Right cardiac atrium (tissue), 5 donors: ENCODE measurements at regions of chr3 and their contacts with region 1.

Region 1: GRCh38 chr3:189961525-189962161 is 159.1 kb downstream of the P3H2 start:
- DNase-seq: peak; percentile 65 to 83 (median 73)
- ATAC-seq: peak; percentile 64 to 83
- H3K4me3 ChIP-seq: no peak overlapping the region
- H3K27ac ChIP-seq: no peak overlapping the region
- H3K4me1 ChIP-seq: no peaks in the 10 kb centered on the region
- H3K27me3 ChIP-seq: peaks cover 3% of the 10 kb centered on the region

Region 2: GRCh38 chr3:190120269-190121060 is 158.8 kb after region 1 on chr3 and contains the start of gene P3H2:
- intact Hi-C with region 1: loop called in 1 of 4 experiments (anchors 10 kb)
- DNase-seq: peak; percentile 81 to 93 (median 93)
- ATAC-seq: peak; percentile 99
- H3K4me3 ChIP-seq: peak within 1 kb of the TSS; percentile 90
- H3K27ac ChIP-seq: peak within 1 kb of the TSS; percentile 65
- H3K4me1 ChIP-seq: no peaks in the 10 kb centered on the region
- H3K27me3 ChIP-seq: no peaks in the 10 kb centered on the region
- total RNA-seq, gene P3H2: 1.7 to 4.1 (median 3.0) TPM

Region 3: GRCh38 chr3:190204200-190204599 is 242.6 kb after region 1 on chr3:
- intact Hi-C with region 1: loop called (anchors 5 kb)
- DNase-seq: no peak
- ATAC-seq: no peak
- H3K4me3 ChIP-seq: no peak overlapping the region
- H3K27ac ChIP-seq: no peak overlapping the region
- H3K4me1 ChIP-seq: no peaks in the 10 kb centered on the region
- H3K27me3 ChIP-seq: no peaks in the 10 kb centered on the region

Region 4: DNA sequence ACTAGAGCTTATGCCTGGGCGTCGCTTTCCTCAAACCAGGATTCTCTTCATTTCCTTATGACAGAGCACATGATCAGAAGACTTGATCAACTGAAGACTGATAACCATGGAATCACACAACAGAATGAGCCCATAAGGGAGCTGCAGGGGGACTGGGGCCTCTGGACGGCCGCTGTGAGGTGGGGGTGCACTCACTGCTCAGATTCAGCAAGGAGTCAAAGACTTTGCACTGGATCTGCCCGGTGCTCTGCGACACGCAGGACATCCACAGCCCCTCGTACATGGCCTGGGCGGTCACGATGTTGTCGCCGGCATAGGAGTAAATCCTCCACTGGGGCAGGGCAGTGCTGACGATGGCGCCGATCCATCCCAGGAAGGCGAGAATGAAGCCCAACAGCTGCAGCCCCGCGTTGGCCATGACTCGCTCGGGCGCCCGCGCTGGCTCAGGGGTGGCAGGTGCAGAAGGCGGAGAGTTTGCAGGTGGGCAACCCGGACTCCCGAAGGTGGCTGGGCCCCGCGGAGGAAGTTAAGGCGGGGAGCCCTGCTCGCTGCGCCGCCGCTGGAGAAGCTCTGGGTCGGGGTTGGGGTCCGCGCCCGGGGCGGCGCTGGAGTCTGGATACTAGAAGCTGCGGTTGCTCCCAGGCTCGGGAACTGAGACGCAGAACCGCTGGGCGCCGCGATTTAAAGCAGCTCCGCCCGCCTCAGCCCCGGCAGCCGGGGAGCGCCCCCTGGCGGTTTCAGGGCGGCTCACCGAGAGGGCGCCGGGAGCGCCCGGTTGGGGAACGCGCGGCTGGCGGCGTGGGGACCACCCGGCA is 360.4 kb after region 1 on chr3 and contains the start of gene CLDN1:
- intact Hi-C with region 1: loop called in 1 of 4 experiments (anchors 5 kb)
- DNase-seq: peak; percentile 84 to 93 (median 92)
- ATAC-seq: peak; percentile 94 to 95
- H3K4me3 ChIP-seq: peak within 1 kb of the TSS; percentile 59
- H3K27ac ChIP-seq: no peak within 1 kb of the TSS
- H3K4me1 ChIP-seq: no peaks in the 10 kb centered on the region
- H3K27me3 ChIP-seq: no peaks in the 10 kb centered on the region
- total RNA-seq, gene CLDN1: 1.2 to 2.0 (median 1.3) TPM

Region 5: GRCh38 chr3:190424478-190425439 is 463.1 kb after region 1 on chr3:
- intact Hi-C with region 1: loop called in 1 of 4 experiments (anchors 5 kb)
- DNase-seq: peak; percentile 45 to 79 (median 71)
- ATAC-seq: peak; percentile 59 to 61
- H3K4me3 ChIP-seq: no peak overlapping the region
- H3K27ac ChIP-seq: no peak overlapping the region
- H3K4me1 ChIP-seq: no peaks in the 10 kb centered on the region
- H3K27me3 ChIP-seq: no peaks in the 10 kb centered on the region